WTC11 (cell line): ENCODE measurements at regions of chr9 and their contacts with region 1.

Region 1: DNA sequence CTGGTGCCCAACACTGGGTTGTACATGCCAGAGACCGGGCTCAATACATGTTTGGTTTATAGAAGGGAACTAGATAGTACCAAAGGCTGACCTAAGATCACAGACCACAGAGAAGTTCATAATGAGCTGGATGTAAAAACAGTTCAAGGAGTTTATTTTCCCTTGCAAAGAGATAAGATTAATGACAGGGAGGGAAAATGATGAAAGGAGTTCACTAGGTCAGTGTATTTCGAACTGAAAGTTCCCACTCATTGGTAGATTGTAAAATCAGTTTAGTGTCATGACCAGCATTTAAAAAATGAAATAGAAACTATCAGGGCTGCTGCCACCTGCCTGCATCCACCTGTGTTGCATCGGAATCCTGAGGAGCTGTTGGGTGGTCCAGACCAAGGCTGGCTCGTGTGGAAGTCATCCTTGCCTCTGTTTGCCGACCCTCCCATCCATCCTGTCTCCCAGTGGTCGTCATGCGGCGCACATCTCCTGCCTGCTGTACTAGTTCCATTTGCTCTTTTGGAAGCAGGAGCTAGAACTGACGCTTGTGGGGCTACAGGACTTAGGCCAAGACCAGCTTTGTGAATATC is 21.1 kb downstream of the TBC1D2 start:
- DNase-seq: peak; percentile 41
- ATAC-seq: peak; percentile 79
- H3K4me3 Mint-ChIP-seq: no peak overlapping the region
- H3K27ac Mint-ChIP-seq: no peak overlapping the region
- H3K4me1 Mint-ChIP-seq: 0 out of 2 replicates have a peak, but pooled peaks cover 3% of the 10 kb centered on the region
- H3K27me3 Mint-ChIP-seq: no peaks in the 10 kb centered on the region
- CTCF ChIP-seq: no peak

Region 2: GRCh38 chr9:98207606-98208005 is 26.7 kb before region 1 on chr9:
- CTCF ChIA-PET with region 1: interaction called, 22 read pairs
- POLR2A ChIA-PET with region 1: no interaction called
- DNase-seq: no peak
- ATAC-seq: no peak
- H3K4me3 Mint-ChIP-seq: no peak overlapping the region
- H3K27ac Mint-ChIP-seq: no peak overlapping the region
- H3K4me1 Mint-ChIP-seq: peaks cover 16% of the 10 kb centered on the region
- H3K27me3 Mint-ChIP-seq: no peaks in the 10 kb centered on the region
- CTCF ChIP-seq: no peak

Region 3: GRCh38 chr9:98218562-98219363 is 15.6 kb before region 1 on chr9:
- CTCF ChIA-PET with region 1: interaction called, 17 read pairs
- POLR2A ChIA-PET with region 1: interaction called, 3 read pairs
- DNase-seq: peak; percentile 59
- ATAC-seq: peak; percentile 86
- H3K4me3 Mint-ChIP-seq: peak overlapping the region; percentile 46
- H3K27ac Mint-ChIP-seq: peak overlapping the region; percentile 99
- H3K4me1 Mint-ChIP-seq: peaks cover 67% of the 10 kb centered on the region
- H3K27me3 Mint-ChIP-seq: no peaks in the 10 kb centered on the region
- CTCF ChIP-seq: no peak

Region 4: DNA sequence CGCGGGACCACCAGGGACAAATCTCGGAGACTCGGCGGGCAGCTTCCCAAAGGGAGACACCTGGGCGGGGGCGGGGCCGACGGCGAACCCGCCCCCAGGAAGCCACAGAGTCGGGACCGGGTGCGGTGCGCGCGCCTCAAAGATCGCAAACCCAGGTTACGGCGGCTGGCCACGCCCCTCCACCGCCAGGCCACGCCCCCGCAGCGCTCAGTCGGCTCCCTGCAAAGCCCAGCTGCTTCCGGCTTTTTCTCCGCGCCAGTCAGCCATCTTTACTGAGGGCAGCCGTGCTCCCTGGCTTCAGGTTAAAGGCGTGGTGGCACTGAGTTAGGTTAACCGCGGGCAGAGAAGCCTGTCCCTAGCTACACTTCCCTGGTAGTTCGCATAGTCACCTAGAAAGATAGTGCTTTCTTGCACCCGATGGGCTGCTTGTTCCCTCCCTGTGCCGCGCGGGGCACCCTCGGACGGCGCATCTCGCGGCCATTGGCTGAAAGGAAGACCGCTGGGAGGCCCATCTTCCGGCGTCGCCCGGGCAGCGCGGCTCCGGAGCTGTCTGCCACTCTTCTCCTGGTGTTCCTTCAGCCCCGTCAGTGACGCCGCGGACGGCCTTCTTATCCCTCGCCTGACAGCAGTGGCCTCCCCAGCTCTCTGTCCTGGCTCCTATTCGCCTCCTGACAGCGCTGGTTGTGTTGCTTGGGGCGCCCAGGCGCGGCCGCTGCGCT is 21.4 kb after region 1 on chr9 and contains the start of gene TBC1D2:
- CTCF ChIA-PET with region 1: interaction called, 13 read pairs
- POLR2A ChIA-PET with region 1: no interaction called
- DNase-seq: peak; percentile 98
- ATAC-seq: peak; percentile 90
- H3K4me3 Mint-ChIP-seq: peak within 1 kb of the TSS; percentile 93
- H3K27ac Mint-ChIP-seq: peak within 1 kb of the TSS; percentile 95
- H3K4me1 Mint-ChIP-seq: peaks cover 42% of the 10 kb centered on the region
- H3K27me3 Mint-ChIP-seq: no peaks in the 10 kb centered on the region
- CTCF ChIP-seq: no peak
- total RNA-seq, gene TBC1D2: 10.6 to 11.4 TPM (median 11.1 TPM) in 3 replicates